ENCODE measurements at regions of chr5 and their contacts with region 1.

Region 1: DNA sequence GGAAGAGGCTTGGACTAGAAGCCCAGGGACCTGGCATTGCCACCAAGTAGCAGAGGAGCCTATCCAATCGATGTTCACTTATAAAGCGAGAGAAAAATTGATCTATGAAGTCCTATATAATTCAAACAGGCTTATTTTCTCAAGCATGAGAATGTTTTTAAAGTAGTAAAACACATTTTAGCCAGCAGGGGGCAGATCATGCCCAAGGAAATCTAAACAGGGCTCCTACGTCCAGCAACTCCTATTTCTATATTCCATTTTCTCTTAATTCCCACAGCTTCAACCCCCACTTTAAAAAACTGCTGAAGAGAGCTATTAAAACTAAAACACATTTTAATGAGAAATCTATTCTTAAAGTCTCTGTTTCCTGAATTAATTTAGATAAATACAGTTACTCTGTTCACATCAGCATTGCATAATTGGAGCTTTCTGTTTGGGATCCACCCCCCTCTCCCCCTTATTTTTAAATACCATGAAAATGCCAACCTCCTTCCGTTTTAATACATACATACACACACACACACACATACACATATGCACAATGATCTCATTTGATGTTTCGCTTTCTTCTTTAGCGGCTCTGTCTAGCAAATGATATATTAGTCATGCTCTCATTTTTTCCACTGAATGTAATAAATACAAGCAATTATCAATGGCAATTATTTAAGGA is 144.9 kb downstream of the MYO10 start:
- DNase-seq: peak; percentile 17 to 55 (median 35)
- H3K4me3 ChIP-seq: no peak overlapping the region
- H3K4me3 Mint-ChIP-seq: peak overlapping the region in 1 of 2 donors; percentile 60
- H3K27ac ChIP-seq: no peak overlapping the region
- H3K27ac Mint-ChIP-seq: no peak overlapping the region
- H3K4me1 ChIP-seq: no peaks in the 10 kb centered on the region
- H3K4me1 Mint-ChIP-seq: peaks cover 8% of the 10 kb centered on the region
- H3K27me3 ChIP-seq: no peaks in the 10 kb centered on the region
- H3K27me3 Mint-ChIP-seq: peaks cover 2 to 4% (median 3%) of the 10 kb centered on the region in 3 donors
- CTCF ChIP-seq: peak; percentile 77

Region 2: GRCh38 chr5:16826379-16827125 is 35.4 kb after region 1 on chr5:
- intact Hi-C with region 1: no loop called
- DNase-seq: no peak
- H3K4me3 ChIP-seq: no peak overlapping the region
- H3K4me3 Mint-ChIP-seq: no peak overlapping the region
- H3K27ac ChIP-seq: no peak overlapping the region
- H3K27ac Mint-ChIP-seq: no peak overlapping the region
- H3K4me1 ChIP-seq: no peaks in the 10 kb centered on the region
- H3K4me1 Mint-ChIP-seq: no peaks in the 10 kb centered on the region
- H3K27me3 ChIP-seq: no peaks in the 10 kb centered on the region
- H3K27me3 Mint-ChIP-seq: peaks cover 2 to 4% (median 2%) of the 10 kb centered on the region in 3 donors
- CTCF ChIP-seq: no peak

Region 3: GRCh38 chr5:17189381-17190036 is 398.3 kb after region 1 on chr5:
- intact Hi-C with region 1: loop called (anchors 2 to 5 kb)
- DNase-seq: peak; percentile 47 to 70 (median 68)
- H3K4me3 ChIP-seq: no peak overlapping the region
- H3K4me3 Mint-ChIP-seq: no peak overlapping the region
- H3K27ac ChIP-seq: no peak overlapping the region
- H3K27ac Mint-ChIP-seq: no peak overlapping the region
- H3K4me1 ChIP-seq: no peaks in the 10 kb centered on the region
- H3K4me1 Mint-ChIP-seq: peaks cover 14% of the 10 kb centered on the region
- H3K27me3 ChIP-seq: no peaks in the 10 kb centered on the region
- H3K27me3 Mint-ChIP-seq: peaks cover 0 to 3% (median 2%) of the 10 kb centered on the region in 3 donors
- CTCF ChIP-seq: peak; percentile 92

Region 4: DNA sequence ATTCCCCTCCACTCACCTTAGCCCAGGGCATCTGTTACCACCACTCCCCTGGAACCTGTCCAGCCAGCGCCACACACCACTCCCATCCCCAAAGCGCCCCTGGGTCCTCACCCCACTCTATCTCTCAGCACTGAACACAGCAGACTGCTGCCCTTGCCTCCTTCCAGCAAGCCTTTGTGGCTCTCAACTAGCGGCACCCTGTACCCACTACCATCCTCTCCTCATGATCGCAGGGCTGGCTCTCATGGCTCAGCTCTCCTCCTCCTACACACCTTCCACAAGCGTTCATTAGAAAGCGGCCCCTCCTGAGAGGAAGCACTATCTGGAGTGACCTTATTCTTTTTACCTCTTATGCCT is 412.9 kb after region 1 on chr5:
- intact Hi-C with region 1: loop called in 1 of 2 experiments (anchors 5 kb)
- DNase-seq: no peak
- H3K4me3 ChIP-seq: no peak overlapping the region
- H3K4me3 Mint-ChIP-seq: no peak overlapping the region
- H3K27ac ChIP-seq: no peak overlapping the region
- H3K27ac Mint-ChIP-seq: peak overlapping the region in 1 of 7 donors; percentile 10
- H3K4me1 ChIP-seq: no peaks in the 10 kb centered on the region
- H3K4me1 Mint-ChIP-seq: no peaks in the 10 kb centered on the region
- H3K27me3 ChIP-seq: no peaks in the 10 kb centered on the region
- H3K27me3 Mint-ChIP-seq: peaks cover 4 to 5% (median 5%) of the 10 kb centered on the region in 3 donors
- CTCF ChIP-seq: no peak

Measured in CD14-positive monocyte (primary cell).